Testis (tissue), 5 donors: ENCODE measurements at regions of chr6 and their contacts with region 1.

Region 1: GRCh38 chr6:36302227-36302976 is 32.5 kb downstream of the PNPLA1 start:
- DNase-seq: peak; percentile 97
- H3K4me3 ChIP-seq: no peak overlapping the region
- H3K27ac ChIP-seq: no peak overlapping the region
- H3K4me1 ChIP-seq: peaks cover 18% of the 10 kb centered on the region
- H3K27me3 ChIP-seq: no peaks in the 10 kb centered on the region
- CTCF ChIP-seq: peak; percentile 88 to 91 (median 91)
- POLR2A ChIP-seq: no peak

Region 2: GRCh38 chr6:36350681-36351571 is 48.5 kb after region 1 on chr6:
- intact Hi-C with region 1: loop called (anchors 10 kb)
- DNase-seq: peak; percentile 85
- H3K4me3 ChIP-seq: no peak overlapping the region
- H3K27ac ChIP-seq: peak overlapping the region; percentile 60 to 80
- H3K4me1 ChIP-seq: peaks cover 32% of the 10 kb centered on the region
- H3K27me3 ChIP-seq: no peaks in the 10 kb centered on the region
- CTCF ChIP-seq: no peak
- POLR2A ChIP-seq: no peak